Caco-2 (cell line): ENCODE measurements at regions of chr22 and their contacts with region 1.

Region 1: GRCh38 chr22:38652859-38653258 is 3.3 kb downstream of the FAM227A start:
- DNase-seq: peak in 1 of 2 experiments; percentile 10
- H3K4me3 ChIP-seq: no peak overlapping the region
- H3K4me3 Mint-ChIP-seq: no peak overlapping the region
- H3K27ac Mint-ChIP-seq: no peak overlapping the region
- H3K4me1 ChIP-seq: no peaks in the 10 kb centered on the region
- H3K4me1 Mint-ChIP-seq: no peaks in the 10 kb centered on the region
- H3K27me3 ChIP-seq: no peaks in the 10 kb centered on the region
- H3K27me3 Mint-ChIP-seq: no peaks in the 10 kb centered on the region
- CTCF ChIP-seq: no peak

Region 2: DNA sequence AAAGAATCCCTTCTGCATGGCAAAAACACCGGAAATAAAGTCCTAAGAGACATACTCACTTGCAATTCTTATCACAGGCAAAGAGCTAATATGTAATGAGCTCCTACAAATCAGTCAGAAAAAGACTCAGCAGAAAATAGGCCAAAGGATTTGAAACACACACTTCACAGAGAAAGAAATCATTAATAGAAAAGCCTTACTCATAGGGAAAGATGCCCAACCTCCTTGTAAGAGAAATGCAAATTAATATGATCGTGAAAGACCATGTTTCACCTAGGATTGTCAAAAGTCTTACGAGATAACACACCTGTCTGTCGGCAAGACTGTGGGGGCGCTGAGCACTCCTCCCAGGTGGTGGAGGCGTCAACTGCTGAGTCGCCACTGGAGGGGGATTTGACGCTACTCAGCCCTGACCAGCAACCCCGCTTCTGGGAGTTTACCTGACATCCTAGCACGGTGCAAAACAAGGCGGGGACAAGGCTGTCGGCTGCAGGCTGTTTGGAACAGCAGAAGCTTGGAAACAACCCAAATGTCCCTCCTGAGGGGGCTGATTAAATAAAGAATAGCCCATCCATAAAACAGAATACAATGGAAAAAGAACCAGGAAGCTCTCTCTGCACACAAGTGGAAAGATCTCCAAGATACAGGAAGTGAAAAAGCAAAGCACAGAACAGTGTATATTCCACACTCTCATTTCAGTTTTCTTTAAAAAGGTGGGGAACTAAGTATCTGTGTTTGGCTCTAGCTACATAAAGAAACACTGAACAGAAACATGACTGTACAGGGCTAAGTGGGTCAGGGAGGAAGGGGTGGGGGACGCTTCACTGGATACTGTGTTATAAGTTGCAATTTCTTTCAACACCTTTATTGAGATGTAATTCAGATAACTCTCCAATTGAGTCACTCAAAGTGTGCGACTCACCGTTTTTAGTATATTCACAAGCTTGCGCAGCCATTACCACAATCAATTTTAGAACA is 347.1 kb before region 1 on chr22:
- CTCF ChIA-PET with region 1: interaction called, 11 read pairs
- POLR2A ChIA-PET with region 1: no interaction called
- intact Hi-C with region 1: no loop called
- DNase-seq: peak in 1 of 2 experiments; percentile 40
- H3K4me3 ChIP-seq: no peak overlapping the region
- H3K4me3 Mint-ChIP-seq: no peak overlapping the region
- H3K27ac Mint-ChIP-seq: no peak overlapping the region
- H3K4me1 ChIP-seq: no peaks in the 10 kb centered on the region
- H3K4me1 Mint-ChIP-seq: no peaks in the 10 kb centered on the region
- H3K27me3 ChIP-seq: no peaks in the 10 kb centered on the region
- H3K27me3 Mint-ChIP-seq: no peaks in the 10 kb centered on the region
- CTCF ChIP-seq: peak in 1 of 2 experiments; percentile 46

Region 3: GRCh38 chr22:38566726-38567504 is 85.9 kb before region 1 on chr22:
- CTCF ChIA-PET with region 1: no interaction called
- POLR2A ChIA-PET with region 1: no interaction called
- intact Hi-C with region 1: no loop called
- DNase-seq: no peak
- H3K4me3 ChIP-seq: no peak overlapping the region
- H3K4me3 Mint-ChIP-seq: no peak overlapping the region
- H3K27ac Mint-ChIP-seq: no peak overlapping the region
- H3K4me1 ChIP-seq: peaks cover 5% of the 10 kb centered on the region; the same call in 1 of the 2 replicates
- H3K4me1 Mint-ChIP-seq: peaks cover 11% of the 10 kb centered on the region
- H3K27me3 ChIP-seq: no peaks in the 10 kb centered on the region
- H3K27me3 Mint-ChIP-seq: no peaks in the 10 kb centered on the region
- CTCF ChIP-seq: no peak